ENCODE measurements at regions of chr2 and their contacts with region 1.

Region 1: DNA sequence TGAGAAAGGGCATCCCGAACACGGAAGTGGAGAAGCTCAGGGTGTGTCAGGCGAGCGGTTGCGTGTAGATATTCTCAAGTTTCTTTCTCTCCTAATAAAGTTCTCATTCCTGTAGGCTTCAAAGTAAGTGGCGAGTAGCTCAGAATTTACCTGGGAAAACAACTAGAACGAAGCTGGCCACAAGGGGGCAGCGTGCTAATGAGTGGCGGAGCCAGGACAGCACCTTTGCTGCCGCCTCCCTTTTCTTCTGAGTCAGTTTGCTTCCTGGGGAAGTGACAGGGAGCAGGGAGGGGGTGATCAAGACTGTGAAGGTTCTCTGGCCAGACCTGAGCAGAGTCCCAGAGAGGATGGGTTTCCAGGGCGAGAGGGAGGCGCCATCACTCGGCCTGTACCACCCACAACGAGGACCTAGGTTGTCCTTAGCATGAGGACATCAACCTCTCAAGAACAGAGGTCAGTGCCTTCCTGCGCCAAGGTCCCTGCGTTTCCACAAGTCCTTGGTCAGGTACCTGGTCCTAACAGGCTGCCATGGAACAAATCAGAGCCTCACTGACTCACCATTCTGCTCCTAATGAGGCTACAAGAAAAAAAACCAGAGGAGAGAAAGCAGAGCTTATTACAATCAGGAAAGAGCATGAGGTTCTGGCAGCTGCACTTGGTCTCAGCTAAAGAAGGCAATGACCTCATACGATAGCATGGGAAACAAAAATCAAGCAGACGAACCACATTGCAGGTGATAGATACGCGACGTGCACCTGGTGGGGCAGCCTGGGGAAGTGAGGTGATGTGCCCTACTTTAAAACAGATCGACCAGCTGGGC is 98.6 kb downstream of the PLB1 start:
- DNase-seq: peak; percentile 85
- H3K4me3 ChIP-seq: no peak overlapping the region; a peak in 1 of 4 replicates
- H3K27ac ChIP-seq: peak overlapping the region in 1 of 2 experiments; percentile 33; a peak in 2 of 4 replicates
- H3K4me1 ChIP-seq: peaks cover 4 to 8% of the 10 kb centered on the region in 2 experiments; a peak in 2 of 4 replicates
- H3K27me3 ChIP-seq: no peaks in the 10 kb centered on the region
- CTCF ChIP-seq: peak; percentile 97
- EP300 ChIP-seq: no peak
- RAD21 ChIP-seq: peak; percentile 91

Region 2: GRCh38 chr2:28610583-28611201 is 16.2 kb after region 1 on chr2:
- CTCF ChIA-PET with region 1: interaction called, 92 read pairs
- POLR2A ChIA-PET with region 1: no interaction called
- DNase-seq: no peak
- H3K4me3 ChIP-seq: no peak overlapping the region
- H3K27ac ChIP-seq: peak overlapping the region in 1 of 2 experiments; percentile 44; a peak in 2 of 4 replicates
- H3K4me1 ChIP-seq: peaks cover 0 to 6% of the 10 kb centered on the region in 2 experiments; a peak in 3 of 4 replicates
- H3K27me3 ChIP-seq: no peaks in the 10 kb centered on the region
- CTCF ChIP-seq: no peak
- EP300 ChIP-seq: peak in 1 of 2 experiments; percentile 74; a peak in 2 of 4 replicates
- RAD21 ChIP-seq: no peak

Region 3: DNA sequence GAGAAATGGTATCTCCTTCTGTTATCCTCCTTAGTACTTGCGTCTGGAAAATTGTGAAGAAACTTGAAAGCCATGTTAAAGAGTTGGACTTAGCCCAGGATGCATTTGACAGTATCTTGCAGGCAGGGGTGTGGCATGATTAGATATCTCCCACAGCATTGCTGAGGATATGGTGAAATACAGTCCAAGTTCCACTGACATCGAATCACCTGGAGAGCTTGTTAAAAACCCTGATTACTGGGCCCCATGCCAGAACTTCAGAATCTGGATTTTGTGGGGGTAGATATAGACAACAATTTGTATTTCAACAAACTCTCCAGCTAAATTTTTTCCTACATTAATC is 60.5 kb after region 1 on chr2:
- CTCF ChIA-PET with region 1: interaction called, 13 read pairs
- POLR2A ChIA-PET with region 1: no interaction called
- DNase-seq: no peak
- H3K4me3 ChIP-seq: no peak overlapping the region
- H3K27ac ChIP-seq: peak overlapping the region in 1 of 2 experiments; percentile 2; a peak in 1 of 4 replicates
- H3K4me1 ChIP-seq: peaks cover 11 to 19% of the 10 kb centered on the region in 2 experiments
- H3K27me3 ChIP-seq: no peaks in the 10 kb centered on the region
- CTCF ChIP-seq: no peak
- EP300 ChIP-seq: no peak
- RAD21 ChIP-seq: no peak

Region 4: GRCh38 chr2:28721601-28722191 is 127.2 kb after region 1 on chr2:
- CTCF ChIA-PET with region 1: interaction called, 10 read pairs
- POLR2A ChIA-PET with region 1: no interaction called
- DNase-seq: no peak
- H3K4me3 ChIP-seq: no peak overlapping the region
- H3K27ac ChIP-seq: no peak overlapping the region
- H3K4me1 ChIP-seq: peaks cover 2 to 9% of the 10 kb centered on the region in 2 experiments; a peak in 3 of 4 replicates
- H3K27me3 ChIP-seq: no peaks in the 10 kb centered on the region
- CTCF ChIP-seq: no peak
- EP300 ChIP-seq: no peak
- RAD21 ChIP-seq: no peak

Region 5: DNA sequence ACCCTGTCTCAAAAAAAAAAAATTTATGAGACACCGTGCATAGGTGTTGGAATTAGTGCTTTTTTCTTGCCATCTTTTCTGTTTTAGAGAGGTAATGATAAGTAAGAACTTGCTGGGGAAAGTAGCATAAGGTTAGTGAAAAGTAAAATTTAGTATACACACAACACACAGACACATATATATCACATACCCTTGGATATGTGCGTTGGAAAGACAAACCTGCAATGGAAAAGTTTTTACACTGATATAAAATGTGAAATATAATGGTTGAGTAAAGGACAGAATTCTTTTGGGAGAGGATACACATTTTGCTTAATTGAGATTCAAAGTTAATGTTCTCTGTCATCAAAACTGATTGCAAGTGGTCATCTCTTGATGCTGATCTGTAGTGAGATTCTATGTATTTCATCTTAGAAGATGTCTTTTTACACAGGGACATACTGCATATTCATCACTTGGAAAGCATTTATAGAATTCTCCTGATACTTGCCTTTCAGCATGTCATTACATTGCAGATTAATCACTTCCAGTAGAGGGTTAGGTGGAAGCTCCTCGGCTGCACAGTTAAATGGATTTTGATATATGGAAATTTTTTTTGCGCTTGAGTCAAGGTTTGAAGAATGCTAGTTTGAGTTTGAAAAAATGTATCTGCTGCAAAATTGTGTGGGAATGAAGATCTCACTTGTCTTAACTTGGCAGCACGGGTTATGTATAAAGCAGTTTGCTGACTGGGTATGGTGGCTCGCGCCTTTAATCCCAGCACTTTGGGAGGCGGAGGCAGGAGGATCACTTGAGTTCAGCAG is 170.6 kb after region 1 on chr2:
- CTCF ChIA-PET with region 1: interaction called, 20 read pairs
- POLR2A ChIA-PET with region 1: no interaction called
- DNase-seq: no peak
- H3K4me3 ChIP-seq: no peak overlapping the region
- H3K27ac ChIP-seq: peak overlapping the region in 1 of 2 experiments; percentile 60; a peak in 3 of 4 replicates
- H3K4me1 ChIP-seq: peaks cover 5 to 21% of the 10 kb centered on the region in 2 experiments; a peak in 3 of 4 replicates
- H3K27me3 ChIP-seq: no peaks in the 10 kb centered on the region
- CTCF ChIP-seq: no peak
- EP300 ChIP-seq: peak in 1 of 2 experiments; percentile 72; a peak in 2 of 4 replicates
- RAD21 ChIP-seq: no peak

Region 6: GRCh38 chr2:28801726-28802487 is 207.4 kb after region 1 on chr2:
- CTCF ChIA-PET with region 1: interaction called, 23 read pairs
- POLR2A ChIA-PET with region 1: no interaction called
- DNase-seq: no peak
- H3K4me3 ChIP-seq: no peak overlapping the region
- H3K27ac ChIP-seq: no peak overlapping the region
- H3K4me1 ChIP-seq: peaks cover 0 to 6% of the 10 kb centered on the region in 2 experiments; a peak in 2 of 4 replicates
- H3K27me3 ChIP-seq: no peaks in the 10 kb centered on the region
- CTCF ChIP-seq: no peak
- EP300 ChIP-seq: no peak
- RAD21 ChIP-seq: no peak

Measured in SK-N-SH (cell line).